HEK293 (cell line): ENCODE measurements at regions of chr3 and their contacts with region 1.

Region 1: GRCh38 chr3:38651154-38651789 is 1.8 kb upstream of the SCN5A start:
- H3K4me3 ChIP-seq: no peak overlapping the region
- H3K27ac ChIP-seq: no peak overlapping the region
- H3K4me1 ChIP-seq: no peaks in the 10 kb centered on the region
- CTCF ChIP-seq: peak; percentile 70

Region 2: DNA sequence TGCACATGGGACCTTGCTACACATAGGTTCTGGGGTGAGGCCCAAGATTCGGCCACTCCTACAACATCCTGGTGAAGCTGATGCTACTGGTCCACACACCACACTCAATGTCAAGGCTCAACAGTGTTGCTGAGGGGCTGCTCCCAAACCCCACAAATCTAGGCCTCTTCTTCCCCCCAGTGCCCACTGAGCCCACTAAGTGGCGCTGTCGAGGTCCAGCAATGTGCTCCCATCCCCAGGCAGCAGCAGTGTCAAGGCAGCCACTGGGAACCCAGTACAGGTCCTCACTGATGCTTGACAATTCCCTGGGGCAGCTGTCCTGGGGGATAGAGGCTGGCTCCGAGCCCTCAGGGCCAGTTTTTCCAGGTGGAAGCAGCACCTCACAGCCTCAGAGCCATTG is 23.3 kb before region 1 on chr3:
- CTCF ChIA-PET with region 1: interaction called, 12 read pairs
- POLR2A ChIA-PET with region 1: no interaction called
- H3K4me3 ChIP-seq: no peak overlapping the region
- H3K27ac ChIP-seq: no peak overlapping the region
- H3K4me1 ChIP-seq: no peaks in the 10 kb centered on the region
- CTCF ChIP-seq: peak; percentile 29; the same call in 1 of the 2 replicates

Region 3: GRCh38 chr3:38662544-38662943 is 11.3 kb after region 1 on chr3:
- CTCF ChIA-PET with region 1: interaction called, 13 read pairs
- POLR2A ChIA-PET with region 1: no interaction called
- H3K4me3 ChIP-seq: no peak overlapping the region
- H3K27ac ChIP-seq: no peak overlapping the region
- H3K4me1 ChIP-seq: no peaks in the 10 kb centered on the region
- CTCF ChIP-seq: no peak